Head of caudate nucleus (tissue), 42 donors: ENCODE measurements at regions of chr15 and their contacts with region 1.

Region 1: DNA sequence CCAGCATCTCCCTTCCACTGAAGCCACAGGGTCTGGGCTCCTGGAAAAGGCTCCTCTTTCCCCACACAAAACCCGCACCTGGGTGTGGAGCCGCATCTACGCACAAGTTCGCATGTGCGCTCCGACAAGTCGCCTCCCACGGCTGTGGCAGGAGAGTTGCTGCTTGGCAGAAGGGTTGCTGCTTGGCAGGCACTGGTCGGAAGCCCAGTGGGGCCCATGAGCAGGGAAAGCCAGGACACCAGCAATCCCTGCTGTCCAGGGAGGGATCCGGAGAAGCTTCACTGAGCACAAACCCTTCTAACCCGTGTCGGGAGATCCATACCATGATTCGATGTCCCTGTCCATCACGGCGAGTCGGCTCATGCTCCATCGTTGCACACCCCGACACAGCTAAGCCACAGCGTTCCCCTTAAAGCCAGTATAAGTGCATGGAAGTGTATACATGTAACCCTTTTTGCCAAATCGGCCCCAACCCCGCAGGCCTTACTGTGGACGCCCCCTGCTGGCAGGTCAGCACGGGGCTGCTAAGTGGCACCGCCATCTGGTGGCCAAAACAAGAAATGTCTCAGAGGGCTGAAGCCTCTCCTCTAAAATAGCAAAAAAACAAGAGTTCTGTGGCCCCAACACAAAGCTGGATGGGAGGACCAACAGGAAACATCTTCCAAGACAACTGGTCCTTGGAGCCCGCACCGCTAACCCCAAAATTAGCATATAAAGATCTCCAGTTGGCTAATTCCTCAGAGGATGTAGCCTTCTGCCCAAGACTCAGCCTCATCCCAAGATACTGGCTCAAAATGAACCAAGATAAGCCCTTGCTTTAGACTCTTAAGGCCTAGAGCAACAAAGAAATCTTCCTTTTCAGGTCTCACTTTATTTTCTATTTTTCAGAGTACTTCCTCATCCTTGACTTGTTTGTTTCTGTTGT is 8.3 kb downstream of the ANKRD63 start:
- DNase-seq: peak; percentile 61 to 93 (median 85)

Region 2: DNA sequence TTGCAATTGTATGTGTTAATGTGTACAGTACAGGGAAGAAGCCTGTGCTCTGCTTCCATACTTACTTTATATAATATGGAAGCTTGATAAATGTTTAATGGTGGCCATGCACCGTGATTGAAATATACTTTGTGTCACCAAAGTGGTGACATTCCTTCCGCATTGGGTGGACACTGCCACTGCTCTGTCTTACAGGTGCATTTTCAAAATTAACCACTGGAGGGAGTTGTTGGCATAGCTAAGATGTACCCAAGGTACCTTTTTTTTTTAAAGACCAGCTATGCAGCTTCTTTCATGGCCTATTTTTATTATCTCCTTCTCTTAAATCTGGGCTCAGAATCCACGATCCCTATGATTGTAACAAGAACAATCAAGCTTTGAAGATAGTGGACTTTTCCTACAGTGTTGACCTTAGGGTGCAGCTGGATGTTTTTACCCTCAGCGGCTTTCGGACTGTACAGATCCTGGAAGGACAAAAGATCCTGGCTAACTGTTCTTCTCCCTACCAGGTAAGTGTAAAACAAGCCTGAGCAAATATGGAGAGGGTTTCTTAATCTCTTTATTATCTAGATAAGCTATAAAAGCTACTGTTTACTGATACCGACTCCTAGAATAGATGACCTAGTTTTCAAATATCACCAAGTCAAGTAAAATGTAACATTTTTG is 57.3 kb before region 1 on chr15:
- intact Hi-C with region 1: loop called (anchors 2 kb)
- DNase-seq: peak in 22 of 42 donors; percentile 12 to 78 (median 54)

Region 3: GRCh38 chr15:40754883-40755811 is 480.5 kb after region 1 on chr15 and contains the start of gene RMDN3:
- intact Hi-C with region 1: no loop called
- DNase-seq: peak; percentile 67 to 97 (median 93)